Aorta (tissue), 5 donors: ENCODE measurements at regions of chr7 and their contacts with region 1.

Region 1: DNA sequence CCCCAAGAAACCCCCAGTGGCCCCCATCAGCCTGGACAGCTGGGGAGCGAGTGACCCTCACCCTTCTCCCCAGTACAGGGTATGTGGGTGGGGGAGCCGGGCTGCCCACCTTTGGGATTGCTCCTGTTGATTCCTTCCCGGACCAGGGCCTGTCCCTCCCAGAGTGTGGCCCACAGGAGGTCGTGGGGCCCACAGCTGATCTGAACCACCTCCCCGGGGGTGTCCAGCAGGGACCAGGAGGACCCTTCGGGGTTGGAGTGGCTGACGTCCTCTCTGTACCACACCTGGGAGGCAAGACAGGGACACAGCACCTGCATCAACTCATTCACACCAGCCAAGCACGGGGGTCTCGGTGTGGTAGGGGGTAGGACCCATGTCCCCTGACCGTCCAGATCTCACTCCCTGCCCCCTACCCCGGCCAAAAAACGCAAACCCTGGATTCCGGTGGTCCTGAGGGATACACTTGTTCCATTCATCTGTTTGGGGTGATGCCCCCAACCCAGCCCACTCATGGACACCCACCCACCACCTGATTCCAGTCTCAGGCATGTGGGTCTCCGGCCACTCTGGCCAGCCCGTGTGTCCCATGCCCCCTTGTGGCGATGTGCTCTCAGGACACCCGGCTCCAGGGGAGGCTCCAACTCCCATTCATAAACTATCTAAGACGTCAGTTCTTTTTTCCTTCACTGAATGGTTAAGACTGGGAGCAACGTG is 10.9 kb downstream of the TECPR1 start:
- DNase-seq: peak; percentile 55 to 75
- ATAC-seq: no peak
- H3K4me3 ChIP-seq: no peak overlapping the region
- H3K27ac ChIP-seq: no peak overlapping the region
- H3K4me1 ChIP-seq: no peaks in the 10 kb centered on the region
- H3K27me3 ChIP-seq: no peaks in the 10 kb centered on the region

Region 2: DNA sequence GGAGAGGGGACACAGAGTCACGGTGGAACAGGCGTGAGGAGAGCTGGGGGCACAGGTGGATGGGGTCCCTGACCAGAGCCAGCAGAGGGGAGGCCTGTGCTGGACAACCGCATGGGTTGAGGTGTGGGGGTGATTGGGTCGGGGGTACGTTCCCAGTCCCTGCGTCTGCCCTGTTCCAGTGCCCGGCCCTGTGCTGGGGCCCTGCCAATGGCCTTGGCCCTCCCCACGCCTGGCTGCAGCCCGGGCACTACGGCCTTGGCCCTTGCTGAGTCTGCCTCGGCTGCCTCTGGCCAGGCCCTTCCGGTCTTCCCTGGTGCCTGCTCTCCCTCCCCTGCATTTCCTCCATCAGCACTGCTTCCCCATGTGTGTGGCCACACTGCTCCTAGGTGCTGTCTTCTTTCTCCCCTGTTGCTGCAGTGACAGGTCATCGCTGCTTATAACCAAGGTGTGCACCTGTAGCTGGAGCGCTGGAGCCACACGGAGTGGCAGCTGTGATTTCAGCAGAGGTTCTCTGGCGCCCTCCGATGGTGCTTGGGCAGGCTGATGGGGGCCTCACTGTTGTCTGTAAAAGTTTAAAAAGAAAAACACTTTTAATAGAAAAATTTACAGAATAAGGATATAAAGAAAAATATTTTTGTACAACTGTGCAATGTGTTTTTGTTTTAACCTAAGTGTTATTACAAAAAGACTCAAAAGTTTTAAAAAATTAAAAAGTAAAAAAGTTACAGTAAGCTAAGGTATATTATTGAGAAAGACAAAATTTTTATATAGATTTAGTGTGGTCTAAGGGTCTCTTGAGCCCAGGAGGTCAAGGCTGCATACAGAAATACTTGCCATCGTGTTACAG is 75.1 kb before region 1 on chr7:
- intact Hi-C with region 1: no loop called
- DNase-seq: peak in 1 of 2 donors; percentile 62
- ATAC-seq: peak; percentile 45
- H3K4me3 ChIP-seq: no peak overlapping the region
- H3K27ac ChIP-seq: no peak overlapping the region
- H3K4me1 ChIP-seq: no peaks in the 10 kb centered on the region
- H3K27me3 ChIP-seq: no peaks in the 10 kb centered on the region

Region 3: DNA sequence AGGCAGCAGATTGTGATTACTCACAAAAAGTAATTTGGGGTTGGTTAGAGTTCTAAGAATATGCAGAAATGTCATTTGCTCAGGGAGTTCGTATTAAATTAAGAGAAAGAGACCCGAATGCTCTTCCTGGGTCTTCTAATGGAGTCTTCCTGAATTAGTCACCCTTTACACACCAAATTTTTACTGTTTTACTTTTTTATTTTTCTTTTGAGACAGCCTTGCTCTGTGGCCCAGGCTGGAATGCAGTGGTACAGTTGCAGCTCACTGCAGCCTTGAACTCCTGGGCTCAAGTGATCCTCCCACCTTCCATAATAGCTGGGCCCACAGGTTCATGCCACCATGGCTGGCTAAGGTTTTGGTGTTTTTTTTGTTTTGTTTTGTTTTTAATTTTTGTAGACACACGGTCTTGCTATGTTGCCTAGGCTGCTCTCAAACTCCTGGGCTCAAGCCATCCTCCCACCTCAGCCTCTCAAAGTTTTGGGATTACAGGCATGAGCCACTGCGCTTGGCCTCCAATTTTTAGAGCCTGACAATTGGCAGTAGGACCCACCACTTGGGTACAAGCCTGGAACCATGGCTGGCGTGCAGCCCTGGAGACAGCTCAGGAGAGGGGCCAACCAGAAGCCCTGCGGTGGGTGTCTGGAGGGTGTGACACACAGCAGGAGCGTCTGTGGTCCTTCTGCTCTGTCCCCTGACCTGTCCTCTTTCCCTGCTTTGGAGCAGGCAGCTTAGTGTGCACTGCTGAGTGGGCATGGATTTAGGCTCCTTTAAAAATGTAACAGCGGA is 46.3 kb before region 1 on chr7:
- intact Hi-C with region 1: loop called in 1 of 2 experiments (anchors 10 kb)
- DNase-seq: no peak
- ATAC-seq: no peak
- H3K4me3 ChIP-seq: no peak overlapping the region
- H3K27ac ChIP-seq: no peak overlapping the region
- H3K4me1 ChIP-seq: no peaks in the 10 kb centered on the region
- H3K27me3 ChIP-seq: no peaks in the 10 kb centered on the region

Region 4: DNA sequence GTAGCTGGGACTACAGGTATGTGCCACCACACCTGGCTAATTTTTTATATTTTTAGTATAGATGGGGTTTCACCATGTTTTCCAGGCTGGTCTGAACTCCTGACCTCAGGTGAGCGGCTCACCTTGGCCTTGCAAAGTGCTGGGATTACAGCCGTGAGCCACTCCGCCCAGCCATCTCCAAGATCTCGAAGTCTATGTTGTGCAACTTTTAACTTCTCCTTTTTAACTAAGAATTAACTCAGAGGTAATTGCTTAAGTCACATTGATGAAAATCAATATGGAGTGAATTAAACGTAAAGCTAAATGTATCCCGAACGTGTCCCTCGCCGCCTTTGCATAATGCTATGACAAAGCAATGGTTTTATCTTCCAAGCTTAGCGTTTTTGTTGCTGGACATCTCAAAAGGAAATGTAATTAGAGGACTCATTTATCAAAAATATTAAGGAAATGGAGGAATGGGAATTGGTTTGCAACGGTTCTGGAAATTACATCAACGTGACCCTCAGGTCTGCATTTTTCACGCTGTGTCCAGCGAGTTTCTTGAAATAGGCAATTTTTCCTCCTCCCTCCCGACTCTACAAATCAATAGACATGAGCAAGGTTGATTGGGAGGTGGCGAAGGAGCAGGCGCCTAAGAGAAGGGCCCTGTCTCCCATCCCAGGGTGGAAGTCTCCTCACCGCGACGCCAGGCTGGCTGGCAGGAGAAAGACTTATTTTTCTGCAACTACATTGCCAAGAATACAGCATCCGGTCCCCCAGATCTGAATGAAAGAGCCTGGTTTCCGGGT is 538.9 kb after region 1 on chr7:
- intact Hi-C with region 1: no loop called
- DNase-seq: no peak
- ATAC-seq: no peak
- H3K4me3 ChIP-seq: no peak overlapping the region
- H3K27ac ChIP-seq: no peak overlapping the region
- H3K4me1 ChIP-seq: no peaks in the 10 kb centered on the region
- H3K27me3 ChIP-seq: no peaks in the 10 kb centered on the region